ENCODE measurements at regions of chr15 and their contacts with region 1.

Region 1: GRCh38 chr15:89893696-89894455 is at the start of gene AP3S2:
- DNase-seq: peak; percentile 90

Region 2: GRCh38 chr15:89904519-89904918 is 10.6 kb after region 1 on chr15:
- CTCF ChIA-PET with region 1: no interaction called
- POLR2A ChIA-PET with region 1: interaction called, 47 read pairs
- DNase-seq: no peak

Region 3: GRCh38 chr15:89912674-89913396 is 19.0 kb after region 1 on chr15 and contains the start of gene ARPIN:
- CTCF ChIA-PET with region 1: interaction called, 5 read pairs
- POLR2A ChIA-PET with region 1: interaction called, 47 read pairs
- DNase-seq: peak; percentile 79

Region 4: GRCh38 chr15:89971592-89971997 is 77.7 kb after region 1 on chr15:
- CTCF ChIA-PET with region 1: interaction called, 5 read pairs
- POLR2A ChIA-PET with region 1: interaction called, 11 read pairs
- DNase-seq: peak; percentile 89

Measured in HEK293T (cell line).